ENCODE measurements at regions of chr3 and their contacts with region 1.

Region 1: DNA sequence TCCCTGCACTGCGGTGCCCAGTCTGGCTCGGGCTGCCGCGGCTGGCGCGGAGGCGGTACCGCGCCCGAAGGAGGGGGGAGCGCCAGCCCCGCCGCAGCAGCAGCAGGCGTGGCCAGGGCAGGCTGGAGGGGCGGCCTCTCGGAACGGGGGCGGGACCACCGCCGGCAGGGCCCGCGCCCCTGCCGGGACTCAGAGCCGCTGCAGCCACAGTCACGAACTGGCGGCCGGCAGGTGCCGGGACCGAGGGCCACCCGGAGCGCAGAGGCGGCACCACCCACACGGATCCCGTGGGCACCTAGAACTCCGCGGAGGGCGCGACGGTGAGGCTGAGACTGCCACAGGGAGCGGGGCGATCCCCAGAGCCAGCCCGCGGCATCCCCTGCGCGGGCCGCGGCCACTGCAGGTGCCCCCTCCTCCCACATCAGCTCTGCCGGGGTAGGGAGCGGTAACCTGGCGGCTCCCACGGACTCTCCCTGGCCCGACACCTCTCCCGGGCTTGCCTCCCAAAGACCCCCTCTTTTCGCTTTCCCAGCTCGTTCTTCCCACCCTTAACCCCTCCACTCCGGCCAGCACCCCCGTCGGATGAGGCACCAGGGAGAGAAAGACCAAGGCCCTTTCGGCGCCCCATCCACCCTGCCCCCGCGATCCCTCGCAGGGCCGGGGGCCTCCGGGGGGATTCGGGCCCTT is at the start of gene VWA5B2:
- DNase-seq: peak; percentile 75 to 87 (median 85)
- H3K4me3 ChIP-seq: peak within 1 kb of the TSS; percentile 19 to 76 (median 49)
- H3K27ac ChIP-seq: no peak within 1 kb of the TSS
- H3K4me1 ChIP-seq: peaks cover 0 to 27% (median 19%) of the 10 kb centered on the region in 4 experiments
- H3K27me3 ChIP-seq: peaks cover 14 to 71% (median 28%) of the 10 kb centered on the region in 5 experiments

Region 2: GRCh38 chr3:183895296-183895695 is 334.2 kb before region 1 on chr3:
- CTCF ChIA-PET with region 1: interaction called, 19 read pairs
- POLR2A ChIA-PET with region 1: no interaction called
- DNase-seq: peak; percentile 58 to 79 (median 77)
- H3K4me3 ChIP-seq: no peak overlapping the region
- H3K27ac ChIP-seq: no peak overlapping the region
- H3K4me1 ChIP-seq: no peaks in the 10 kb centered on the region
- H3K27me3 ChIP-seq: peaks cover 0 to 10% (median 3%) of the 10 kb centered on the region in 5 experiments

Region 3: GRCh38 chr3:184209146-184209923 is 20.2 kb before region 1 on chr3:
- CTCF ChIA-PET with region 1: interaction called, 10 read pairs
- POLR2A ChIA-PET with region 1: no interaction called
- DNase-seq: no peak
- H3K4me3 ChIP-seq: no peak overlapping the region
- H3K27ac ChIP-seq: no peak overlapping the region
- H3K4me1 ChIP-seq: no peaks in the 10 kb centered on the region
- H3K27me3 ChIP-seq: peaks cover 2 to 12% (median 3%) of the 10 kb centered on the region in 5 experiments

Region 4: GRCh38 chr3:184218814-184219213 is 10.7 kb before region 1 on chr3:
- CTCF ChIA-PET with region 1: interaction called, 16 read pairs
- POLR2A ChIA-PET with region 1: interaction called, 7 read pairs
- DNase-seq: peak in 1 of 3 donors; percentile 28
- H3K4me3 ChIP-seq: no peak overlapping the region
- H3K27ac ChIP-seq: no peak overlapping the region
- H3K4me1 ChIP-seq: no peaks in the 10 kb centered on the region
- H3K27me3 ChIP-seq: peaks cover 0 to 4% (median 2%) of the 10 kb centered on the region in 5 experiments

Region 5: GRCh38 chr3:184241447-184242296 is 12.1 kb after region 1 on chr3:
- CTCF ChIA-PET with region 1: interaction called, 79 read pairs
- POLR2A ChIA-PET with region 1: interaction called, 4 read pairs
- DNase-seq: peak in 2 of 3 donors; percentile 37 to 62
- H3K4me3 ChIP-seq: no peak overlapping the region
- H3K27ac ChIP-seq: no peak overlapping the region
- H3K4me1 ChIP-seq: peaks cover 0 to 5% (median 2%) of the 10 kb centered on the region in 4 experiments
- H3K27me3 ChIP-seq: no peaks in the 10 kb centered on the region

Region 6: GRCh38 chr3:184250167-184250828 is 20.8 kb after region 1 on chr3:
- CTCF ChIA-PET with region 1: interaction called, 70 read pairs
- POLR2A ChIA-PET with region 1: no interaction called
- DNase-seq: peak; percentile 90 to 94 (median 92)
- H3K4me3 ChIP-seq: peak overlapping the region; percentile 76 to 100 (median 89)
- H3K27ac ChIP-seq: peak overlapping the region; percentile 25 to 92
- H3K4me1 ChIP-seq: peaks cover 5 to 23% (median 17%) of the 10 kb centered on the region in 4 experiments
- H3K27me3 ChIP-seq: no peaks in the 10 kb centered on the region

Region 7: GRCh38 chr3:184289426-184289938 is 59.9 kb after region 1 on chr3:
- CTCF ChIA-PET with region 1: interaction called, 10 read pairs
- POLR2A ChIA-PET with region 1: no interaction called
- DNase-seq: peak; percentile 64 to 79 (median 76)
- H3K4me3 ChIP-seq: no peak overlapping the region
- H3K27ac ChIP-seq: no peak overlapping the region
- H3K4me1 ChIP-seq: peaks cover 0 to 4% (median 0%) of the 10 kb centered on the region in 4 experiments
- H3K27me3 ChIP-seq: peaks cover 0 to 8% (median 4%) of the 10 kb centered on the region in 5 experiments

Region 8: GRCh38 chr3:184308744-184309143 is 79.2 kb after region 1 on chr3:
- CTCF ChIA-PET with region 1: no interaction called
- POLR2A ChIA-PET with region 1: no interaction called
- DNase-seq: no peak
- H3K4me3 ChIP-seq: no peak overlapping the region
- H3K27ac ChIP-seq: peak overlapping the region in 1 of 2 experiments; percentile 43
- H3K4me1 ChIP-seq: no peaks in the 10 kb centered on the region
- H3K27me3 ChIP-seq: no peaks in the 10 kb centered on the region